ENCODE measurements at regions of chr12 and their contacts with region 1.

Region 1: GRCh38 chr12:131850856-131851559 is 22.8 kb downstream of the MMP17 start:
- DNase-seq: peak in 2 of 3 donors; percentile 72 to 78
- ATAC-seq: peak in 3 of 4 donors; percentile 89 to 99 (median 96)
- H3K4me3 ChIP-seq: no peak overlapping the region
- H3K27ac ChIP-seq: no peak overlapping the region
- H3K4me1 ChIP-seq: no peaks in the 10 kb centered on the region
- H3K27me3 ChIP-seq: no peaks in the 10 kb centered on the region
- CTCF ChIP-seq: peak; percentile 66 to 81 (median 72)
- POLR2A ChIP-seq: no peak

Region 2: DNA sequence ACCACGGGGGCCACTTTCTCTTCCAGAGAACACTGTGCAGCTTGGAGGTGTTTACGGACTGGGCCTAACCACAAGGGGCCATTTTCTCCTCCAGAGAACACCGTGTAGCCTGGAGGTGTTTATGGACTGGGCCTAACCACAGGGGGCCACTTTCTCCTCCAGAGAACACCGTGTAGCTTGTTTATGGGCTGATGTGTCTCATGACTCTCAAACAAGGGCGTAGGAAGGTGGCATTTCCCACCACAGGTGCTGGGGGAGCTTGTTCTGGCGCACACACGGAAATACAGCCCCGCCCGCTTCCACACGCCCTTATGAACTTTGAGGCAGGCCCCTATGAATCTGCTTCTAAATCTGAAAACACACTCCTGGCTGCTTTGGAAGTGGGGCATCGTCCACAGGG is 314.7 kb before region 1 on chr12:
- intact Hi-C with region 1: no loop called
- DNase-seq: no peak
- ATAC-seq: no peak
- H3K4me3 ChIP-seq: no peak overlapping the region
- H3K27ac ChIP-seq: no peak overlapping the region
- H3K4me1 ChIP-seq: no peaks in the 10 kb centered on the region
- H3K27me3 ChIP-seq: no peaks in the 10 kb centered on the region
- CTCF ChIP-seq: no peak
- POLR2A ChIP-seq: no peak

Region 3: GRCh38 chr12:131783915-131784541 is 67.0 kb before region 1 on chr12:
- intact Hi-C with region 1: no loop called
- DNase-seq: no peak
- ATAC-seq: no peak
- H3K4me3 ChIP-seq: no peak overlapping the region
- H3K27ac ChIP-seq: no peak overlapping the region
- H3K4me1 ChIP-seq: no peaks in the 10 kb centered on the region
- H3K27me3 ChIP-seq: no peaks in the 10 kb centered on the region
- CTCF ChIP-seq: no peak
- POLR2A ChIP-seq: no peak

Region 4: DNA sequence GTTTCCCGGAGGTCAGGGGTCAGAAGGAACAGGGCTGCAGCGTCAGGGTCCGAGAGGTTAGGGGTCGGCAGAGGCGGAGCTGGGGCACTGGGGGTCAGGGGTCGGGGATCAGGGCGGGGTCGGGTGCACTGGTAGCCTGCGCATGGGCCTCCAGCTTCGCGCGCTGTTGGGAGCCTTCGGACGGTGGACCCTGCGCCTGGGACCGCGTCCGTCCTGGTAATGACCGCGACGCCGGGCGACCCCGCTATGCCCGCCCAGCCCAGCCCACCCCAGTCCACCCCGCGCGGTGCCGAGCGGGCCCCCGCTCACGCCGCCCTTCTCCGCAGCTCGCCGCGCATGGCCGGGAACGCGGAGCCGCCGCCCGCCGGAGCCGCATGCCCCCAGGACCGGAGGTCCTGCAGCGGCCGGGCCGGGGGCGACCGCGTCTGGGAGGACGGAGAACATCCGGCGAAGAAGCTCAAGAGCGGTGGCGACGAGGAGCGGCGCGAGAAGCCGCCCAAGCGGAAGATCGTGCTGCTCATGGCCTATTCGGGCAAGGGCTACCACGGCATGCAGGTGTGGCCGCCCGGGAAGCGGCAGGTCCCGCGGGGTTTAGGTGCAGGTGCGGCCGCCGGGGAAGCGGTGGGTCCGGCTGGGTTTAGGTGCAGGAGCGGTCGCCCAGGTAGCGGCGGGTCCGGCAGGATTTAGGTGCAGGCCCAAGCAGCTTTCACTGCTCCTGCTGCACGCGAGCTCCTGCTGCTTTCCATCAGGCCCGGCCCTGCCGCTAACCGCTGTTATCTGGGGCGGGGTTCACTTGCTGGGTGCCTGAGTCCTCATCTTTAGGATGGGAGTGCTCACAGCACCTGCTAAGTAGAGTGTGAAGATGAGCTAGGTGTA is 78.8 kb after region 1 on chr12:
- intact Hi-C with region 1: loop called in 1 of 2 experiments (anchors 10 kb)
- DNase-seq: peak in 1 of 3 donors; percentile 49
- ATAC-seq: peak; percentile 2 to 21 (median 6)
- H3K4me3 ChIP-seq: peak overlapping the region; percentile 80 to 87 (median 85)
- H3K27ac ChIP-seq: no peak overlapping the region
- H3K4me1 ChIP-seq: peaks cover 0 to 8% (median 0%) of the 10 kb centered on the region in 4 donors
- H3K27me3 ChIP-seq: no peaks in the 10 kb centered on the region
- CTCF ChIP-seq: no peak
- POLR2A ChIP-seq: no peak

Region 5: GRCh38 chr12:131949431-131950181 is 98.6 kb after region 1 on chr12 and contains the start of gene EP400:
- intact Hi-C with region 1: loop called in 1 of 2 experiments (anchors 10 kb)
- DNase-seq: peak; percentile 96 to 97 (median 97)
- ATAC-seq: peak; percentile 96 to 99 (median 98)
- H3K4me3 ChIP-seq: peak within 1 kb of the TSS; percentile 94 to 98 (median 95)
- H3K27ac ChIP-seq: peak within 1 kb of the TSS; percentile 1 to 55 (median 48)
- H3K4me1 ChIP-seq: peaks cover 0 to 10% (median 3%) of the 10 kb centered on the region in 4 donors
- H3K27me3 ChIP-seq: no peaks in the 10 kb centered on the region
- CTCF ChIP-seq: peak; percentile 36 to 66 (median 56)
- POLR2A ChIP-seq: peak; percentile 54
- total RNA-seq, gene EP400: 10.9 to 16.3 (median 13.3) TPM

Region 6: GRCh38 chr12:132003846-132004245 is 152.8 kb after region 1 on chr12:
- intact Hi-C with region 1: loop called in 1 of 2 experiments (anchors 5 kb)
- DNase-seq: no peak
- ATAC-seq: no peak
- H3K4me3 ChIP-seq: no peak overlapping the region
- H3K27ac ChIP-seq: no peak overlapping the region
- H3K4me1 ChIP-seq: no peaks in the 10 kb centered on the region
- H3K27me3 ChIP-seq: no peaks in the 10 kb centered on the region
- CTCF ChIP-seq: no peak
- POLR2A ChIP-seq: no peak